Activated CD4-positive, alpha-beta T cell treated with anti-CD3 and anti-CD28 coated beads, Interleukin-2, amount 10 ng/mL, durations not matched to agents 7 days and 5 days (primary cell): ENCODE measurements at regions of chr14 and their contacts with region 1.

Region 1: DNA sequence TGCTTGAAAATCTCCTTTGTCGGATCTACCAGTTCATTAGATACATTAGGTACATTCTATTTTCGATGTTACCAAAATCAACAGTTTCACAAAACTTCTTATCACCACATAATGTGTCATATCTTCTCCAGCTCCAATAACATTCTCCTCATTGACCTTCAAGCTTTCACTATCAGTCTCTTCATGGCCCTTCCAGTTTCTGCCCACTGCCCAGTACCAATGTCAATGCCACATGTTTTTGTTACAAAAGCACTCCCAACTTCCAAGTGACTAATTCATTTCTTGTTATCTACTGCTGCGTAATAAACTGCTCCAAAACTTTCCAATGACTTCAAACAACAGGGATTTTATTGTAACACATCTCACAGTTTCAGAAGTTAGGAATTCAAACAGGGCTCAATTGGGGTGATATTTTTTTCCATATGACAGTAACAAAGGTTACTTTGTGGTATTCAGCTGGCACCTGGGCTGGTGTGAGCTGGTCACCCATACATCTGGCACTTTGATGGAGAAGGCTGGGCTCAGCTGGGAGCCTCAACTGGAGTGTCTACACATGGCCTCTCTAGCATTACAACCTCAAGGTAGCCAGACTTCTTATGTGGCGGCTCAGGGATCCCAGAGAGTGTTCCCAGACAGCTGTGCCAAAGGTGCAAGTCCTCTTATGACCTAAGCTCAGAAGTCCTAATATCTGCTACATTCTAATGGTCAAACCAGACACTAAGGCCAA is 6.1 kb downstream of the OR5AU1 start:
- DNase-seq: no peak
- H3K4me3 Mint-ChIP-seq: no peak overlapping the region
- H3K27ac Mint-ChIP-seq: no peak overlapping the region
- H3K4me1 Mint-ChIP-seq: no peaks in the 10 kb centered on the region
- H3K27me3 Mint-ChIP-seq: peaks cover 7% of the 10 kb centered on the region

Region 2: GRCh38 chr14:21168055-21168454 is 18.3 kb after region 1 on chr14:
- CTCF ChIA-PET with region 1: no interaction called
- POLR2A ChIA-PET with region 1: no interaction called
- DNase-seq: no peak
- H3K4me3 Mint-ChIP-seq: no peak overlapping the region
- H3K27ac Mint-ChIP-seq: no peak overlapping the region
- H3K4me1 Mint-ChIP-seq: no peaks in the 10 kb centered on the region
- H3K27me3 Mint-ChIP-seq: peaks cover 21% of the 10 kb centered on the region

Region 3: GRCh38 chr14:21241218-21241819 is 91.5 kb after region 1 on chr14:
- CTCF ChIA-PET with region 1: no interaction called
- POLR2A ChIA-PET with region 1: no interaction called
- DNase-seq: peak; percentile 25
- H3K4me3 Mint-ChIP-seq: no peak overlapping the region
- H3K27ac Mint-ChIP-seq: peak overlapping the region; percentile 65
- H3K4me1 Mint-ChIP-seq: peaks cover 57% of the 10 kb centered on the region
- H3K27me3 Mint-ChIP-seq: no peaks in the 10 kb centered on the region

Region 4: GRCh38 chr14:21408147-21408546 is 258.3 kb after region 1 on chr14:
- CTCF ChIA-PET with region 1: no interaction called
- POLR2A ChIA-PET with region 1: interaction called, 13 read pairs
- DNase-seq: no peak
- H3K4me3 Mint-ChIP-seq: no peak overlapping the region
- H3K27ac Mint-ChIP-seq: no peak overlapping the region
- H3K4me1 Mint-ChIP-seq: no peaks in the 10 kb centered on the region
- H3K27me3 Mint-ChIP-seq: no peaks in the 10 kb centered on the region